ENCODE measurements at regions of chr2 and their contacts with region 1.

Region 1: DNA sequence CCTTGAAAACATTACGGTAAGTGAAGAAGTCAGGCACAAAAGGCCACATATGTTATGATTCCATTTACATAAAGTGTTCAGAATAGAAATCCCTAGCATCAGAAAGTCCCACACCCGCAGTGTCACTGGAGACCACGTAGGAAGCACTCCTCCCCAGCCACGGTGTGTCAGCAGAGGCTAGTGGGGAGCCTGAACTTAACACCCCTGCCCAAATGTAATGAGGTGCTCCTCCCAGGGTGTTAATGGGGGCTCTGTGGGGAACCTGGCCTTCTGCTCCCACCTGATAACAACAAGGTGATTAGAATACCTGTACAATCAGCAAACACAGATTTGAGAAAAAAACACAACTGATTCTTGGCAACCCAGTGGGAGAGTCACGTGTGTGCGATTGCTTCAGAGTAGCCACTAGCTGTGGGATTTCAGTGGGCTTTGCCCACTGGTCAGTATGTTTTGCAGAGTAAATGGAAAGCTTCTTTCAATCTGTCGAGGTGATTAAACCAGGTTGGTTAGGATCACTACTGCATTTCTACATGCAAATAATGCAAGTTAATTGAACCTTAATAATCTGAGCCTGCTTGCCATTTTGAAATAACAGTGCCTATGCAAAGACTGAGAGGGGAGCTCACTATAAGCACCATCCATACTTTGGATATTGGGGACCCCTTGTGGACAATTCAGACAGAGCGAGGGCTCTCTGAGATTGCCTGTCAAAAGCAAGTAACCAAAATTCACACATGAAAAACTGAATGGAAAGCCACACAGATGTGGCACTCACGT is 20.6 kb upstream of the ATRAID start:
- DNase-seq: peak in 1 of 2 donors; percentile 67
- H3K4me3 ChIP-seq: no peak overlapping the region
- H3K27ac ChIP-seq: no peak overlapping the region
- H3K4me1 ChIP-seq: peaks cover 0 to 10% (median 0%) of the 10 kb centered on the region in 4 donors
- H3K27me3 ChIP-seq: peaks cover 0 to 17% of the 10 kb centered on the region in 2 donors
- CTCF ChIP-seq: peak; percentile 47 to 58

Region 2: GRCh38 chr2:27032495-27033252 is 158.6 kb before region 1 on chr2 and contains the start of gene TMEM214:
- intact Hi-C with region 1: no loop called
- DNase-seq: peak; percentile 91 to 93
- H3K4me3 ChIP-seq: peak within 1 kb of the TSS; percentile 96 to 98
- H3K27ac ChIP-seq: peak within 1 kb of the TSS; percentile 91
- H3K4me1 ChIP-seq: peaks cover 0 to 22% (median 16%) of the 10 kb centered on the region in 4 donors
- H3K27me3 ChIP-seq: no peaks in the 10 kb centered on the region
- CTCF ChIP-seq: peak; percentile 6 to 24

Region 3: DNA sequence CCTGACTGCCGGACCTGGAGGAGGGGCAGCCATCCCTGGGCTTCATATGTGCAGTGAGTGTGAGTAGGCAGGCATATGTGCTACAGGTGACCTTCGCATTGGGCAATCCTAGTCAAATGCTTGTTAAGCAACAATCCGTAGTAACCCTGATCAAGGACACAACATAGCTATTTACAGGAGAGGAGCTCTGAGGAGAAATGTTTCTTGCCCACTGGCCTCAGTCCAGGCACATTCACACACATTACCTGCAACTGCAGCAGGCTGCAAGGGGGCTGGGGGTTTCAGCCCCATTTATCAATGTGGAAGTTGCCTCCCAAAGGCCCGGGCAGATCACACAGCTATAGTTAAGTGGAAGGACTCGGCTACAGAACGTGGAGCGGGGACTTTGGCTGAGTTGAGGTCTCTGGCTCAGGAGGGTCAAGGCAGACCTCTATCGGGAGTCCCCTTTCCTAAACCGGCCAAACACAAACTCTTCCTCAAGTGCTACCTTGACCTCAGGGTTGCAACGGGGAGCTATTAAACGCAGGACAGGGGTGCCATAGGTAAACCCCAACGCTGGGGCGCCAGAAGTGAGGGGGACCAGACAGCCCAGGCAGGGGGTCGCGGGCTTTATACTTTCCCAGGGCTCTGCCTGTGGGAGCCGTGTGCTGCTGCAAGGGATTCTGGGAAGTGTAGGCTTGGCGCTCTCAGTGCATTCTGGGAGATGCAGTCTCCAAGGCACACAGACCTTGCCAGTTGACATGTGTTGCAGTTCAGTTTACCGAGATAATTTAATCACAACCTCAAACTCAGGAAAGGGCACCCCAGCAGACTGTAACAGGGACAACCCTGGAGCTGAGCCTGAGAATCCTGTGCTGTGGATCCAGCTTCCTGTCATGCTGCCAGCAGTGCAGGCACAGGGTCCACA is 95.2 kb before region 1 on chr2:
- intact Hi-C with region 1: loop called (anchors 5 kb)
- DNase-seq: no peak
- H3K4me3 ChIP-seq: peak overlapping the region; percentile 19 to 37
- H3K27ac ChIP-seq: no peak overlapping the region
- H3K4me1 ChIP-seq: peaks cover 0 to 8% (median 4%) of the 10 kb centered on the region in 4 donors
- H3K27me3 ChIP-seq: no peaks in the 10 kb centered on the region
- CTCF ChIP-seq: no peak

Region 4: DNA sequence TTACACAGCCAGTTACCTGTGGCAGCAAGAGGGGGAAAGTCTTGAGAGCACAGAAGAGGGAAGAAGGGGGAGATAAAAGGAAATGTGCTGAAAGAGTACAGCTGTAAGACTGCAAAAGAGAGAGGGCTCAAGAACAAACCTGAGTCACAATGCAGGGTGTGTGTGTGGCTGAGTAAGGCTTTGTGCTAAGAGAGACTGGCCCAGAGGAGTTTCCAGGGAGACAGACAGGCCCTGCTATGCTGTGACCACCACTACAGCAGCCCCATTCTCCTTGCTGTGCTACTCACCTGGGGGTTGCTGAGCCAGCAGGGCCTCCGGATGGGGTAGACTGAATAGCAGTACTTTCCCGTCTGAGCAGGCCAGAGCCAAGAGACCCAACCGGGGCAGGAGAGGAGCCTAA is 144.1 kb after region 1 on chr2:
- intact Hi-C with region 1: no loop called
- DNase-seq: no peak
- H3K4me3 ChIP-seq: no peak overlapping the region
- H3K27ac ChIP-seq: no peak overlapping the region
- H3K4me1 ChIP-seq: no peaks in the 10 kb centered on the region
- H3K27me3 ChIP-seq: no peaks in the 10 kb centered on the region
- CTCF ChIP-seq: no peak

Measured in tibial artery (tissue), 4 donors.